Activated CD4-positive, alpha-beta T cell treated with anti-CD3 and anti-CD28 coated beads for 36 hours (primary cell): ENCODE measurements at regions of chr1 and their contacts with region 1.

Region 1: DNA sequence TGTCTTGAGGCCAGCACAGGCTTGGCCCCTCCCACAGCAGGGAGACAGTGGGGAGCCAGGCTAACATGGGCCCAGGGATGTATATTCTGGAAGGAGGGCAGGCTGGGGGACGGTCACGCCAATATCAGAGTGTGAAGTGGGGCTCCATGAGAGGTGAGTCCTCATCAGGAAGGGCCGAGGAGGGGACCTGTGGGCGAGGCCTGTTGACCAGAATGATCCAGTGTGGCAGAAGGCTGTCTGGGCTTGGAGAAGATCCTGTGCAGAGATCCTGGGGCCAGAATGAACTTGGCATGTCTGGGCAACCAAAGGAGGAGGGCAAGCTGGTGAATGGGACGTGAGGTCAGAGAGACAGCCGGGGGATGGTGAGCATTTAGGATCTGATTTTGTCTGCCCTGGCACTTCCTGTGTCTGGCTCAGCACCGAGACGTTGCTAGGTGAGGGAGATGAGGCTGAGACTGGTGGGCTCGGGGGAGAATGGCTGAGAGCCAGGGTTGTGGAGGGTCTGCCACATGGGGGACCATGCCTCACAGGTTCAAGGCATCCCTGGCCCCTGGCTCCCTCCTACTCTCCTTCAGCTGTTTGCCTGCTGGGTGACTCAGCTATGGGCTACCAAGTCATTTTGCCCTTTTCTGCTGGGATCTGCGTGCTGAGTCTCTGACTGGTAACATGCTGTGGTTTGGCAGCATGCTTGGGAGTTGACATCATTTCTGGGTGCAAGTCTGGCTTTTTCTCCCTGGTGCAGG is 17.3 kb downstream of the GALNT2 start:
- DNase-seq: peak; percentile 89
- ATAC-seq: peak; percentile 97
- H3K4me3 Mint-ChIP-seq: peak overlapping the region; percentile 11
- H3K27ac Mint-ChIP-seq: peak overlapping the region; percentile 87
- H3K4me1 Mint-ChIP-seq: peaks cover 74% of the 10 kb centered on the region
- H3K27me3 Mint-ChIP-seq: no peaks in the 10 kb centered on the region

Region 2: DNA sequence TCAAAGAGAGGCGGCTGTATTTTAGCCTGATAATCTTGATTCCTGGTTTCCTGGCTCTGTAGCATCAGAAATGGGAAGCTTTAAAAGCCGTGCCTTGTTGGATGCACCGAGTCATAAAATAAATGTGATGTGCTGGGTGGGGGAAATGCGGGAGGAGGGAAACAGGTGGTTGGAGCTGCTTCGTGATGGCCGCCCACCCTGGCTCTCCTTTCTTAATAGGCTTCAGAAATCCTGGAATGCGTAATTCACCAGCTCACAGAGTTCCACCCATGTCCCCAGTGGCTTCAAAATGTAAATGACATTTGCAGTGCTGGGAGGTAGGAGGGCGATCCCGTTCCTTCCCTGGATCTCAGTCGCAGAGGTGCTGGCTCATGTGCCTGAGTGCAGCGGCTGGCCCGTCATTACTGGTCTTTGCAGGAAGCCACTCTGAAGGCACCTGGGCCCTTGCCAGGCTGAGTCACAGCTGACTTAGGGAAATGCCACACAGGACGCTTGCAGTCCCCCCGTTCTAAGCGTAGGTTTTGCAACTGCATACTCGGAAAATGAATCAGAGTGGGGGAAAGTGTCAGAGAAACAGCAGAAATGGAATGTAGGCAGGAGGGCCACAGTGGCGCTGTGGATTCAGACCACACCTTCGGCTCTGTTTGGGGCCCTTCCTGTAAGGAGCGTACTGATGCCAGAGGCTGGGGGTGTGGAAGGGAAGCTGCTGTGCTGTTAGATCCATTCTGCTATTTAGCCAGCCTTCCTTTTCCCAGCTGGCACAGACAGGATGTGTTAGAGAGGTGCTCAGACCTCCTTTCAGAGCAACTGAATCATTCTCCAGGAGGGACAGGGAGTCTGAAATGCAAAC is 20.3 kb after region 1 on chr1:
- CTCF ChIA-PET with region 1: interaction called, 10 read pairs
- POLR2A ChIA-PET with region 1: interaction called, 9 read pairs
- intact Hi-C with region 1: loop called (anchors 1 kb)
- DNase-seq: peak; percentile 95
- ATAC-seq: peak; percentile 78
- H3K4me3 Mint-ChIP-seq: peak overlapping the region; percentile 44
- H3K27ac Mint-ChIP-seq: peak overlapping the region; percentile 92
- H3K4me1 Mint-ChIP-seq: peaks cover 86% of the 10 kb centered on the region
- H3K27me3 Mint-ChIP-seq: no peaks in the 10 kb centered on the region

Region 3: DNA sequence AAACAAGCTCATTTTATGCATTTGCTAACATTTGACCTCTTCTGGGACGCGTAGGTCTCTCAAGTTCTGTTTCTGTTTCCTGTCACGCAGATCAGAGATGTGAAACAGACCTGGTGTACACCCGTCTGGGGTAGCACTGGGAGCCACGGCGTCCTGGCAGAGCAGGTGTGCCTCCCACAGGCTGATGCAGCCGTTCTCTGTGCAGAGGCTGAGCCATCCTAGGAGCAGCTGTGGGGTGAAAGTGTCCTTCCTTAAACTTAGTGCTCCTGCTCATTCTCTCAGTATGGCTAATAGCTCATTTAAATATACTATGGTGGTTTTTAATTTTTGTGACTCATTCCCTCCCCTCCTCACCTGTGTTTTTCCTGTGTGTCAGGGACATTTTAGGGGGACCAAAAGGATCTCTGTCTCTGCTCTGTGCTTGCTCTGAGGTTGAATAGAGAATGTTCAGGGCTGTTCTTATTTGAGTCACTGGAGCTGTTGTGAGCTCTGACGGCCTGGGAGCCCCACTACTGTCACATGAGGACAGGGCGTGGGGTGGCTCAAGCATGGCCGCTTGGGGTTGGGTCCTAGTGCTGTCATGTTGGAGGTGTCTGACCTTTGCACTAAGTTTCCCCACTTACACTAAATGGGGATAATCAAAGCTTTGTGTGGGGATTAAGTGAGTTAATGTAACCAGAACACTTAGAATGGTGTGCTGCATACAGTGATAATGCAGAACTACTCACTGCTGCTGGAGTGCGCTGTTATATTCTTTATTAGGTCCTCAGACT is 25.8 kb after region 1 on chr1:
- CTCF ChIA-PET with region 1: interaction called, 6 read pairs
- POLR2A ChIA-PET with region 1: interaction called, 9 read pairs
- intact Hi-C with region 1: loop called (anchors 1 kb)
- DNase-seq: peak; percentile 94
- ATAC-seq: peak; percentile 91
- H3K4me3 Mint-ChIP-seq: peak overlapping the region; percentile 48
- H3K27ac Mint-ChIP-seq: peak overlapping the region; percentile 94
- H3K4me1 Mint-ChIP-seq: peaks cover 88% of the 10 kb centered on the region
- H3K27me3 Mint-ChIP-seq: no peaks in the 10 kb centered on the region

Region 4: GRCh38 chr1:230123280-230124185 is 39.2 kb after region 1 on chr1:
- CTCF ChIA-PET with region 1: interaction called, 5 read pairs
- POLR2A ChIA-PET with region 1: no interaction called
- intact Hi-C with region 1: loop called in 1 of 2 experiments (anchors 2 kb)
- DNase-seq: peak; percentile 57
- ATAC-seq: peak; percentile 49
- H3K4me3 Mint-ChIP-seq: no peak overlapping the region
- H3K27ac Mint-ChIP-seq: peak overlapping the region; percentile 53
- H3K4me1 Mint-ChIP-seq: peaks cover 69% of the 10 kb centered on the region
- H3K27me3 Mint-ChIP-seq: no peaks in the 10 kb centered on the region

Region 5: GRCh38 chr1:230972855-230973271 is 888.6 kb after region 1 on chr1:
- CTCF ChIA-PET with region 1: no interaction called
- POLR2A ChIA-PET with region 1: no interaction called
- intact Hi-C with region 1: no loop called
- DNase-seq: peak; percentile 80
- ATAC-seq: peak; percentile 82
- H3K4me3 Mint-ChIP-seq: no peak overlapping the region
- H3K27ac Mint-ChIP-seq: peak overlapping the region; percentile 89
- H3K4me1 Mint-ChIP-seq: peaks cover 68% of the 10 kb centered on the region
- H3K27me3 Mint-ChIP-seq: no peaks in the 10 kb centered on the region